Ovary (tissue), 10 donors: ENCODE measurements at regions of chr15 and their contacts with region 1.

Region 1: GRCh38 chr15:92499731-92500530 is 106.2 kb downstream of the ST8SIA2 start:
- DNase-seq: no peak
- H3K4me3 ChIP-seq: no peak overlapping the region
- H3K27ac ChIP-seq: no peak overlapping the region
- H3K4me1 ChIP-seq: no peaks in the 10 kb centered on the region
- H3K27me3 ChIP-seq: no peaks in the 10 kb centered on the region
- CTCF ChIP-seq: no peak
- EP300 ChIP-seq: no peak
- POLR2A ChIP-seq: no peak

Region 2: DNA sequence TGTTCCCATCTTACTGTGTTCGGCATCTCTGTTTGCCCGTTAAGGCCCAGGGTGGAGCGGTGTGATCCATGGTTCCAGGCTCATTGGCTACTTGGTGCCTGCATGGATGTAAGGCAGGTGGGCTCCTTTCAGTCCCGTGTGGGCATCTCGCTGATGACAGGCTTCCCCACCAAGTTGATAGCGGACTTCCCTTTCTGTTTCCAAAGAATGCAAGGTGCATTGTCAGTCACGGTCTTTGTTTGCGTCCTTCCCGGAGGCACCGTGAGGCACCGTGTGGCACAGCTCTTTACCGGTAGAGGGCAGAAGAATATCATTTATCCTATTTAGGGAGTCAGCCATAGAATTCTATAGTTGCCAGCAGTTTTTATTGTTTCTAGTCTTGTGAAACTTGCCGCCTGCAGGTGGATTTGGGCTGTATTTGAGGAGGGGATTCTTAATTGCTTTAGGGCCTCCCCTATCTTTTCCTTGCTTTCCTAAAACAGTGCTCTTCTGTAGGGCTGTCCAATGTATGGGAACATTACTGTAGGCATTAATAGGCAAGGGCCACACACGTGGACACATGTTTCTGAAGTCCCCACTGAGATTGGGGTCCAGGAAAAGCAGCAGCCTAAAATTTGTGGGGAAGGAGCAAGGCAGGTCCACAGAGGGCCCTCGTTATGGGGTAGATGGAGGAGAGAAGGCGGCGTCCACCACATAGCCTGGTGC is 402.3 kb before region 1 on chr15:
- intact Hi-C with region 1: loop called in 1 of 4 experiments (anchors 10 kb)
- DNase-seq: peak in 1 of 5 donors; percentile 37
- H3K4me3 ChIP-seq: no peak overlapping the region
- H3K27ac ChIP-seq: no peak overlapping the region
- H3K4me1 ChIP-seq: peaks cover 3% of the 10 kb centered on the region
- H3K27me3 ChIP-seq: no peaks in the 10 kb centered on the region
- CTCF ChIP-seq: peak in 2 of 3 donors; percentile 46 to 47
- EP300 ChIP-seq: no peak
- POLR2A ChIP-seq: no peak

Region 3: GRCh38 chr15:92217896-92218295 is 282.0 kb before region 1 on chr15:
- intact Hi-C with region 1: no loop called
- DNase-seq: no peak
- H3K4me3 ChIP-seq: no peak overlapping the region
- H3K27ac ChIP-seq: no peak overlapping the region
- H3K4me1 ChIP-seq: no peaks in the 10 kb centered on the region
- H3K27me3 ChIP-seq: no peaks in the 10 kb centered on the region
- CTCF ChIP-seq: no peak
- EP300 ChIP-seq: no peak
- POLR2A ChIP-seq: no peak

Region 4: DNA sequence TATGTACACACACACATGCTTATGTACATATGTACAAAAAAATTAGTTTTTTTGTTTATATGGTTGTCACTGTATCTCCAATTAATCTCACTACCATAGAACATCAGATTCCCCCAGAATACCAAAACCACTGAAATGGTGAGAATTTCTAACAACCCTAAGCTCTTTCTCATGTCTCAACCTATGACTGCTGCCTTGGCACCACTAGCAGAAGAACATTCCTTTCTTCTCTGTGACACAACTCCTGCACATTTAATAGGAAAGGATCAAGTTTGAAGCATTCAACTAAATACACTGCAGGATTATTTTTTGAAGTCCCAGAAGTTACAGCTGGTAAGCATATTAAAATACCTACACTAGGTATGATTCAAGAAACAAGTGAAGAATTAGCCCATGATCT is 46.1 kb after region 1 on chr15:
- intact Hi-C with region 1: no loop called
- DNase-seq: no peak
- H3K4me3 ChIP-seq: no peak overlapping the region
- H3K27ac ChIP-seq: no peak overlapping the region
- H3K4me1 ChIP-seq: no peaks in the 10 kb centered on the region
- H3K27me3 ChIP-seq: no peaks in the 10 kb centered on the region
- CTCF ChIP-seq: no peak
- EP300 ChIP-seq: no peak
- POLR2A ChIP-seq: no peak

Region 5: DNA sequence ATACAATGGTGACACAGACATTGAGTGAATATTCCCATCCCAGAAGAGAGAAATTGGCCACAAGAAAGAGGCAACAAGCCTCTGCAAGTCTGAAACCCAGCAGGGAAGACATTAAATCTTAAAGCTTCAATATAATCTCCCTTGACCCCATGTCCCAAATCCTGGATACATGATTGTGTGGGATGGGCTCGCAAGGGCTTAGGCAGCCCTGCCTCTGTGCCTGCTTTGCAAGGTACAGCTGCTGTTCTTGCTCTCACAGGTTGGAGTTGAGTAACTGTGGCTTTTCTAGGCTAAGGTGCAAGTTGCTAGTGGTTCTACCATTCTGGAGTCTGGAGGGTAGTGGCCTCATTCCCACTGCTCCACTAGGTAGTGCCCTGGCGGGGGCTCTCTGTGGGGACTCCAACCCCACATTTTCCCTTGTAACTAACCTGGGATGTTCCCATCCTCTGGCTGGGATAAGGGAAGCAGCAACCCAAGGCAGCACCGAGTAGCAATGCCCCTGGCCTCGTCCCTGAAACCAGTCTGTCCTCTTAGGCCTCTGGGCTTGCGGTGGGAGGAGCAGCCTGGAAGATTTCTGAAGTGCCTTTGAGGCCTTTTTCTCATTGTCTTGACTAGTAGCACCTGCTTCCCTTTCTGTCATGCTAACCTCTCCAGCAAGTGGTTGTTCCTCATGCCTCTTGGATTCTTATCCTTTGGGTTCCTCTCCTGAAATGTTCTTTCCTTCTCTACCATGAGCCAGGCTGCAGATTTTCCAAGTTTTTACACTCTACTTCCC is 65.6 kb after region 1 on chr15:
- intact Hi-C with region 1: no loop called
- DNase-seq: no peak
- H3K4me3 ChIP-seq: no peak overlapping the region
- H3K27ac ChIP-seq: no peak overlapping the region
- H3K4me1 ChIP-seq: no peaks in the 10 kb centered on the region
- H3K27me3 ChIP-seq: no peaks in the 10 kb centered on the region
- CTCF ChIP-seq: no peak
- EP300 ChIP-seq: no peak
- POLR2A ChIP-seq: no peak

Region 6: DNA sequence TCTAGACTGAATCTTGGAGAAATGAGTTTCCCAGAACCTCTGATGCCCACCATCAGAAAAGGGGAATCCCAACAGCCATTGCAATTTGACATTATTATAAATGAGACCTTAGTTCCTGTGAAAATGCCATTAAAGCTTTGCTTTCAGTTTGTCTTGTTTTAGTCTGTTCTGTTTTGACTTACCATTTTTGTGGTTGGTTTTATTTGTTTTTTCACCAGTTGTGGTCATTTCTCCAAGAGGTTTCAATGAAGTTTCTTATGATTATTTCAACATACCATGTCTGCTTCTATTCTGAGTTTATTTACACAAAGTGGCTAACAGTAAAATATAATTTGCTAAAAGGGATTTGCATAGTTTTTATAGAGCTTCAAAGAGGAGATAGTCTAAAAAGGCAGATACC is 1556.4 kb after region 1 on chr15:
- intact Hi-C with region 1: no loop called
- DNase-seq: no peak
- H3K4me3 ChIP-seq: no peak overlapping the region
- H3K27ac ChIP-seq: no peak overlapping the region
- H3K4me1 ChIP-seq: no peaks in the 10 kb centered on the region
- H3K27me3 ChIP-seq: no peaks in the 10 kb centered on the region
- CTCF ChIP-seq: no peak
- EP300 ChIP-seq: no peak
- POLR2A ChIP-seq: no peak